ENCODE measurements at regions of chr17 and their contacts with region 1.

Region 1: DNA sequence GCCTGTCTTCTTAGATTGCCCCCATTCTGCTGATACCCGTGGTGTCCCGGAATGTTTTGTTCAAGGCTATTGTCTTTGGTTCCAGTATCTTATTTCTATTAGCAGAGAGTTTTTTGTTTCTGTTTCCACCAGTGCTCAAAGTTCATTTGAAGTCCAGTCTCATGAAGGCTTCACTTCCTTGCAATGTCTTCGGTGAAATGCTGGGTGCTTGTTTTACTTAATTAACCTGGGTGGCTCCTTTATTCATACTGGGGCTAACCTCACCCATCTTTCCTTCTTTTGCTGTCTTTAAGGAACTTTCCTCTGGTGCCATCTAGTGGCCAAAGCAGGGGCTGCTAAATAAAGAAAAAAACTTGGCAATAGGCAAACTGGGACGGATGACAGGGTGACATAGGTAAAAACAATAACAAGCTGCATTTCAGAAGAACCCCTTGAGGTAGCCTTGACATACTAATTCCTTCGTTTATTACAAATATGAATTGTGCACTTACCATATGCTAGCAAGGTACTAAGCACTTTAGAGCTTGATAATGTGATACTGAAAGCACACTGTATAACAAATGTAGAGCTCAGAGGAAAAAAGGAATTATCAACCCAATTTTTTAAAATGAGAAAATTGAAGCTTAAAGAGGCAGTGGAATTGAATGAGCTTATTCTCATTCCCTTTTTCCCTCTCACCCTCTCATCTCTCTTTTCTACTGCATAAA is 2.8 kb upstream of the SMIM36 start:
- DNase-seq: peak; percentile 30
- H3K4me3 ChIP-seq: no peak overlapping the region
- H3K27ac ChIP-seq: no peak overlapping the region
- H3K27me3 ChIP-seq: peaks cover 5% of the 10 kb centered on the region
- CTCF ChIP-seq: peak; percentile 99

Region 2: GRCh38 chr17:55348749-55349354 is 165.2 kb before region 1 on chr17:
- CTCF ChIA-PET with region 1: interaction called, 60 read pairs
- POLR2A ChIA-PET with region 1: no interaction called
- DNase-seq: peak; percentile 8
- H3K4me3 ChIP-seq: no peak overlapping the region
- H3K27ac ChIP-seq: no peak overlapping the region
- H3K27me3 ChIP-seq: peaks cover 6% of the 10 kb centered on the region
- CTCF ChIP-seq: peak; percentile 92

Region 3: GRCh38 chr17:55388842-55389241 is 125.2 kb before region 1 on chr17:
- CTCF ChIA-PET with region 1: interaction called, 39 read pairs
- POLR2A ChIA-PET with region 1: no interaction called
- DNase-seq: no peak
- H3K4me3 ChIP-seq: no peak overlapping the region
- H3K27ac ChIP-seq: no peak overlapping the region
- H3K27me3 ChIP-seq: peaks cover 2% of the 10 kb centered on the region
- CTCF ChIP-seq: no peak

Region 4: DNA sequence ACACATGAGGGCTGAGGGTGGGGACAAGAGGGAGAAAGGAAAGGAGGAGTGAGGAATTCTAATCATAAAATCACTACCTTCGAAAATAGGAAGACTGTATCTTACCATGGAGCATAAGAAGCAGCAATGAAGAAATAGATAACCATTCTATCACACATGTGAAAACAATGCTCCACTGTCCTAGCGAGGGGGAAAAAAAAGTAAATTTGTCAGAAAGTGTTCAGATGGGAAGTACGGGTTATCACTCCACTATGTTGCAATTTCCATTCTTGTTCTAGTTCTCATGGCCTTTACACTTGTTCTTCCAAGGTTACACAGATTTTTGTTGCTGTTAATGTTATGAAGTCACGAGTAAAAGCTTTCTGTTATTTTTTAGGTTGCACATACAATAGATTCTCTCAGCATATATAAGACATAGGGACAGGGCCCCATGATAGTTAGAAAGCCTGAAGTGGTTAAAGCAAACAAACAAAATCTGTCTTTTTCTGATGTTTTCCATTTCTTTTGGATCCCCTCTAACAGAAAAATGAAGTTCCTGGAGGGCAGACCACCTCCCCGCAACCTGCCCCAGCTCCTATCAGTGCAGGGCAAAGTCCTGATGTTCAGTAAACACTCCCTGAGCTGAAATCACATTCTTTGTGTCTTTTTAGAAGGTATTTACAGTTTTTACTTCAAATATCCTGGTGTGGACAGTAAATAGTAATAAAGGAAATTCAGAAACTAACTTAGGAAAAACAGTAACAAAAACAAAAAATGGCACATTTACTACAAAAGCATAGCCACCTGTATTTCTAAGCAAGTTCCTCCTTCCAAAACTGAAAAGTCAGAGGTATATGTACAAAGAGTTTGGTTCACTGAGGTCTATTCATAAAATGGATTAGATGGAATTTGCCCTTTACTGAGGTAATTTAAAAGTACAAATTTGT is 106.1 kb before region 1 on chr17:
- CTCF ChIA-PET with region 1: interaction called, 14 read pairs
- POLR2A ChIA-PET with region 1: no interaction called
- DNase-seq: no peak
- H3K4me3 ChIP-seq: no peak overlapping the region
- H3K27ac ChIP-seq: no peak overlapping the region
- H3K27me3 ChIP-seq: no peaks in the 10 kb centered on the region
- CTCF ChIP-seq: no peak

Region 5: DNA sequence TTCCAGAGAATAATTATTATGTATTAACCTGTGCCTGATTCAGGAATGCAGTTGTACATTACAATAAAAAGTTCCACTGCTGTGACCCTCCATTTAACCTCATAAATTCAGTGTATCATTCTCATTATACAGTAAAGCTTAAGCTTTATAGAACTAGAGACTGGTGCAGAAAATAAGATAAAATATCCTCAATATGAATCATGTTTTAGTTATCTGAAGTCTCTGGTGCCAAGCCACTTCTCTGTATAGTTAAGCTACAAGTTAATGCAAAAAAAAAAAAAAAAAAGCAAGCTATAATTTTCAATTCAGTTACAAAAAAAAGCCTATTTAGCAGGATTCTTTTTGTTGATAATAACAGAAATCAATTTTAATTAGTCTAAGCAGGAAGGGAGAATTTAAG is 19.6 kb after region 1 on chr17:
- CTCF ChIA-PET with region 1: interaction called, 12 read pairs
- POLR2A ChIA-PET with region 1: no interaction called
- DNase-seq: no peak
- H3K4me3 ChIP-seq: no peak overlapping the region
- H3K27ac ChIP-seq: no peak overlapping the region
- H3K27me3 ChIP-seq: no peaks in the 10 kb centered on the region
- CTCF ChIP-seq: no peak

Measured in AG04450 (cell line).